ENCODE measurements at regions of chr1 and their contacts with region 1.

Region 1: DNA sequence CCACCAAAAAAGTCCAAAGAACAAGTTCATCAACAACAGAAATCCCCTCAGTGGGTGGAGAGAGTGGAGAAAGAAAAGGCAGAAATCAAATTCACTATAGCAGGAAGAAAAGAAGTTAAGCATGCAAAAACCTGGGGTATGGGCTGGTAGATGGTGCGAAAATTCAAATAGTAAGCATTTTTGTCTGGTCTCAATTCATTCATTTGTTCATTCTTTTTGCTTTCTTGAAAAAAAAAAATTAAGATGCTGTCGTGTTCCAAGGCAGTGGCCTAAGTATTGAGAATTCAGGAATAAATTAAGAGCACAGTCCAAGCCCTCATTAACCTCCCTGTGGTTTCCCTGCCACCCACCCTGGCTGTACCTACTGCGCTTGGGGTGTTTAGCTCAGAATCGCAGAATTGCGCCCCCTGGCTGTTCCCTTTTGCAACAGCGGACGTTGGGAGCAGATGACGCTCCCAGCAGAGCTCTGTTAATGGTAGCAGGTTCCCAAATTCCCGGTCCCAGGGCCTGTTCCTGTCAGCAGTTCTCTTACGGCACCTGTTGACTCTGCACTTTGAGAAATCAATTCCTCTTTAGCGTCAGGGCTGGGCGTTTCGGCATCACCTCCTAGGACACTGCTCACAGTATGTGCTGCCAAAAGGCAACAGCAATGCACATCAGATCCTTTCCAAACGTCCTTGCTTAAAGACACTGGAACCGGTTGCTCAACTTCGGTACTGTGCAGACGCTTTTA is 34.0 kb upstream of the SSX2IP start:
- DNase-seq: peak in 33 of 35 experiments; percentile 4 to 68 (median 40)
- ATAC-seq: peak in 3 of 4 experiments; percentile 50 to 63 (median 51)
- H3K4me3 ChIP-seq: no peak overlapping the region
- H3K4me3 Mint-ChIP-seq: no peak overlapping the region
- H3K27ac ChIP-seq: no peak overlapping the region
- H3K27ac Mint-ChIP-seq: no peak overlapping the region
- H3K4me1 ChIP-seq: peaks cover 0 to 4% of the 10 kb centered on the region in 2 experiments
- H3K4me1 Mint-ChIP-seq: no peaks in the 10 kb centered on the region
- H3K27me3 ChIP-seq: peaks cover 0 to 5% of the 10 kb centered on the region in 2 experiments
- H3K27me3 Mint-ChIP-seq: no peaks in the 10 kb centered on the region

Region 2: GRCh38 chr1:84668185-84668584 is 56.1 kb before region 1 on chr1:
- CTCF ChIA-PET with region 1: interaction called, 12 to 20 read pairs
- POLR2A ChIA-PET with region 1: no interaction called
- DNase-seq: peak in 2 of 35 experiments; percentile 2 to 47
- ATAC-seq: peak in 1 of 4 experiments; percentile 63
- H3K4me3 ChIP-seq: no peak overlapping the region
- H3K4me3 Mint-ChIP-seq: no peak overlapping the region
- H3K27ac ChIP-seq: no peak overlapping the region
- H3K27ac Mint-ChIP-seq: no peak overlapping the region
- H3K4me1 ChIP-seq: no peaks in the 10 kb centered on the region
- H3K4me1 Mint-ChIP-seq: peaks cover 5 to 15% (median 11%) of the 10 kb centered on the region in 3 donors
- H3K27me3 ChIP-seq: no peaks in the 10 kb centered on the region
- H3K27me3 Mint-ChIP-seq: no peaks in the 10 kb centered on the region

Region 3: DNA sequence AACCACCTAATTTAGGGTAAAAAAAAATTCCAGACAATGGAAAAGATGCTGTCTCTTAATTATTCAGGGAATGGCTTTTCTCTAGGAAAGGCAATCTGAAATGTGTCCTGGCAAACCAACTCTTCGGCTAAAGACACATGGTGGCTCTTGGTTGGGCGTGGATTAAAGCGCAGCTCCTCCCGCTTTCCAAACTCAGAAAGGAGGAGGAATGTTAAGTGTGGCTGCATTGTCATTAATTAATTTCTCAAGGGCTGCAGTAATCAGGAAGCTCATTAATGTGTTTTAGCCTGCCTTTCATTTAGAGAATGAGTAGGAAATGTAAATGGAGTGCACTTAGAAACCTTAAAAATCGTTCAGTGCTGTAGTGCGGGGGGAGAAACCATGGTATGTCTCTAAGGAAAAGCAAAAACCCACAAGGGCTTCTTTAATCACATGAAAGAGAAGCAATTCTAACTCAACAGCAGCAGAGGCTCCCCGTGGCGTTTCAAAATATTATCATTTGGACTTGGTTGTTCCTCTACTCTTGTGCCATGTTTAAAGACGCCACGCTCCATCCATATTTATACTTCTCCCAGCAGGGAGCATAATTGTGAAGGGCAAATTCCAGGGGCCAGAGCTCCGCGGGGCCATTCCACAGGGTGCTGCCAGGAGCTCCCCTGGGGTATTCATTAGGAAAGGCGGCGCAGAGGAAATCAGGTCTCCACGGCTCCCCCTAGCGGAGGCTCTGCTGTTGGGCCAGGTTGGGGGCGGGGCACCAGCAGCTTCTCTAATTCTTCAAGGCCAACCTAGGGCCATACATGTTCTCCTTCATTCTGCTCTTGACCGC is 57.9 kb after region 1 on chr1:
- CTCF ChIA-PET with region 1: no interaction called
- POLR2A ChIA-PET with region 1: no interaction called
- DNase-seq: peak; percentile 42 to 85 (median 70)
- ATAC-seq: peak; percentile 86 to 94 (median 88)
- H3K4me3 ChIP-seq: peak overlapping the region; percentile 20 to 32
- H3K4me3 Mint-ChIP-seq: peak overlapping the region; percentile 75 to 78 (median 77)
- H3K27ac ChIP-seq: no peak overlapping the region
- H3K27ac Mint-ChIP-seq: peak overlapping the region; percentile 47 to 88
- H3K4me1 ChIP-seq: peaks cover 11 to 24% of the 10 kb centered on the region in 2 experiments
- H3K4me1 Mint-ChIP-seq: peaks cover 30 to 34% (median 30%) of the 10 kb centered on the region in 3 donors
- H3K27me3 ChIP-seq: no peaks in the 10 kb centered on the region
- H3K27me3 Mint-ChIP-seq: no peaks in the 10 kb centered on the region